ENCODE measurements at regions of chr9 and their contacts with region 1.

Region 1: DNA sequence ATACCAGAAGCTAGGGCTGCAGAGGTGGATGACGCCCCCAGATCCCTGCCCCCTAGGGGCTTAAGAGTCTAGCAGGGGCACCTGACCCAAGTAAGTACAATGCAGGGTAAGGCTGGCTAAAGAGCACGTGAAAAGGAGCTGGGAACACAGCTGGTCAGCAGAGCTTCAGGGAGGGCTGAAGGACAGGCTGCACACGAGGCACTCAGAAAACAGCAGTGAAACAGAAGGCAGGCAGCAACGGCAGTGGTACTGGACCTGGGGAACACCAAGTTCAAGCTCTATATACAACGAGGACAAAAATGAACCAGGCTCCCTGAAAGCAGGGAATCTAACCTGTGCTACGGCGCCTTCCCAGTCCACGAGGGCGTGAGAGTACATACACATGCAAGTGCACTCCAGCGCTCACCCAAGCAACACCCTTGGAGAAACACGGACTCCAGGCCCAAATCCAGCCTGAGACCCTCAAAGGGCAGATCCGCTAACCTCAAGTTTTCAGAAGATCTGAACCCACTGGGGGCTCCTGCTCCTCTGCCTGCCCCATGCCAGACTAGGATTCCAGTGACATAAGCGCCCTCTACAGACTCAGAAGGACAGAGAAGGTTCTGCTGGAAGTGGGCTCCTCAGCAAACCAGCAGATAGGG is 57.4 kb downstream of the PSMB7 start:
- DNase-seq: no peak
- H3K4me3 ChIP-seq: no peak overlapping the region
- H3K27ac ChIP-seq: no peak overlapping the region
- H3K4me1 ChIP-seq: no peaks in the 10 kb centered on the region
- H3K27me3 ChIP-seq: no peaks in the 10 kb centered on the region
- CTCF ChIP-seq: peak in 1 of 2 donors; percentile 19
- POLR2A ChIP-seq: peak; percentile 34

Region 2: GRCh38 chr9:124216567-124217176 is 141.2 kb before region 1 on chr9:
- CTCF ChIA-PET with region 1: no interaction called
- POLR2A ChIA-PET with region 1: no interaction called
- dilution Hi-C with region 1: no loop called
- intact Hi-C with region 1: no loop called
- DNase-seq: no peak
- H3K4me3 ChIP-seq: no peak overlapping the region
- H3K27ac ChIP-seq: no peak overlapping the region
- H3K4me1 ChIP-seq: peaks cover 65% of the 10 kb centered on the region
- H3K27me3 ChIP-seq: no peaks in the 10 kb centered on the region
- CTCF ChIP-seq: no peak
- POLR2A ChIP-seq: no peak

Region 3: DNA sequence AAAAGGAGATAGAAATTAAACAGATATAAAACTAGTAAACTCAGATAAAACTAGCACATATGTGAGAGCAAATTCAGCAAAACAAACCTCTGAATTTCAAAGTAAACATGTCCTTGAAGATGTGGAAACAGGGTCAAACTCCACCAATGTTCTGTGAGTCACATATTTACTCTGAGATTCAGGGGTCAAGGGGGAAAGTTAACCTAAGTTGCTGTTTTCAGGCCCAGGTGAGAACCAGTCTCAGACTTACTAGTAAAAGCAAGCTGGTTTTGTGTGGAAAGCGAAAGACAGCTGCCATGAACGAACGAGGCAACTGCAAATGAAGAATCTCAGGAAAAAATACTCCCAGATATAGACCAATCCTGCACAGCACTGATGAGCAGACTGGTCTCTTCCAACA is 28.4 kb after region 1 on chr9:
- CTCF ChIA-PET with region 1: interaction called, 16 read pairs
- POLR2A ChIA-PET with region 1: no interaction called
- dilution Hi-C with region 1: no loop called
- intact Hi-C with region 1: no loop called
- DNase-seq: peak; percentile 8
- H3K4me3 ChIP-seq: no peak overlapping the region
- H3K27ac ChIP-seq: no peak overlapping the region
- H3K4me1 ChIP-seq: peaks cover 22% of the 10 kb centered on the region
- H3K27me3 ChIP-seq: no peaks in the 10 kb centered on the region
- CTCF ChIP-seq: no peak
- POLR2A ChIP-seq: no peak

Measured in endothelial cell of umbilical vein (primary cell).